CD8-positive, alpha-beta T cell (primary cell): ENCODE measurements at regions of chr20 and their contacts with region 1.

Region 1: DNA sequence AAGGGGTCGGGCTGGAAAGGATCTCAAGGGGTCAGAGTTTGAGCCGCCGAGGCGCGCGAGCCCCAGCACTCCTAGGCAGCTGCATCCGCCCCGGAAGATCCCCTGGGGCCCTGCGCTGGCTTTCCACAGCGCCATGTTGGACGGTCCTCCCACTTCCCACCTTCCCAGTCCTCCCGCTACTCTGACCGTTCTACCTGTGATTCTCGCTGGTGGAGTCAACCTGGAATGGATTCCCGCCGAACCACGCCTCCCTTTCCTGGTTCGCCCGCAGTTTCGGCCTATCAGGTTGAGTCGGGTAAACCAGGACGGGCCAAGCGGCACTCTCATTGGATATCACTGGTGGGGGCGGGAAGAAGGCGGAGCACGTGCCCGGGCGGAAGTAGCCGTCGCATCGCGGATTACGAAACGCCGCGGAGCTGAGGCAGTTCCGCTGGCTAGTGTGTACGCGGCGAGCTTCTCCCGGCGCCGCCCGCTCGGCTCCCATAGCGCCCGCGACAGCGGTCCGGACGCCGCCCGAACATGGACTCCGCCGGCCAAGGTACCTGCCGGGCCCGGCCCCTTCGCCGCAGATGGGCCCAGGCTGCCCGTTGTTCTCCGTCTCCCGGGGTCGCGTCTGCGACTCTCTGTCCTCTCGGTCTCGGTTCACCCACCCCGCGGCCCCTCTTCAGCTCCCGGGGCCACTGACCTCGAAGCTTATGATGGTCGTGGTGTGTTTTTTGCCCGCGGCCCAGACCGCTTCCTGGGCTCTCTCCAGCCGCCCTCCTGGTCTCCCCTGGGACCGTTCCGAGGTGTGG is at the start of gene TPD52L2:
- DNase-seq: peak; percentile 95 to 99 (median 97)
- ATAC-seq: peak; percentile 89
- H3K4me3 ChIP-seq: peak within 1 kb of the TSS; percentile 62 to 95
- H3K4me3 Mint-ChIP-seq: peak within 1 kb of the TSS; percentile 98
- H3K27ac ChIP-seq: peak within 1 kb of the TSS; percentile 59 to 86
- H3K27ac Mint-ChIP-seq: peak within 1 kb of the TSS; percentile 97
- H3K4me1 ChIP-seq: peaks cover 23% of the 10 kb centered on the region
- H3K4me1 Mint-ChIP-seq: peaks cover 34% of the 10 kb centered on the region
- H3K27me3 ChIP-seq: no peaks in the 10 kb centered on the region
- H3K27me3 Mint-ChIP-seq: no peaks in the 10 kb centered on the region
- CTCF ChIP-seq: no peak
- total RNA-seq, gene TPD52L2: 18.7 to 19.4 TPM

Region 2: DNA sequence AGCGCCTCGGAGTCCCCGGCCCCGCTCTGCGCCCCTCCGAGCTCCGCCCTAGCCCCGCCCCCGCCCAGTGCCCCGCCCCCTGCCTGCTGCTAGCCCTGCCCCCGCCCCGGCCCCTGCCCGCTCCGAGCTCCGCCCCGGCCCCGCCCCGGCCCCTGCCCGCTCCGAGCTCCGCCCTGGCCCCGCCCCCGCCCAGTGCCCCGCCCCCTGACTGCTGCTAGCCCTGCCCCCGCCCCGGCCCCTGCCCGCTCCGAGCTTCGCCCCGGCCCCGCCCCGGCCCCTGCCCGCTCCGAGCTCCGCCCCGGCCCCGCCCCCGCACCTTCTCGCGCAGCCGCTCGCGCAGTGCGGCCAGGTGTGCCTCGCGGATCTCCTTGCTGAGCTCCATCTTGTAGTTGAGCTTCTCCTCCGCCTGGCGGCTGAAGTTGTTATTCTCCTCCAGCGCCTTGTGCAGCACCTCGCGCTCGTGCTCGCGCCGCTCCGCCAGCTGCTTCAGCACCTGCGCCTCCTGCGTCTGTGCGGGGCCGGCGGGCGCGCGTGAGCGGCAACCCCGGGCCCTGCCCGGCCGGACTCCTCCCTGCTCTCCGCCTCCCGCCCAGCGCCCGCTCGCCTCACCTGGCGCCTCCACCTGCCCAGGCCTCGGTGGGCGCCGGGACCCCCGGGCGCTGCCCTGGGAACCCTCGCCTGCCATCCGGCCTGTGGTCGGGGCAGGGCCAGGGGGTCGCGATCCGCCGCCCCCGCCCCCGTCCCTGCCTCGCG is 223.1 kb before region 1 on chr20:
- CTCF ChIA-PET with region 1: interaction called, 4 read pairs
- POLR2A ChIA-PET with region 1: interaction called, 3 read pairs
- intact Hi-C with region 1: loop called in 1 of 2 experiments (anchors 5 kb)
- DNase-seq: peak; percentile 96 to 99 (median 97)
- ATAC-seq: peak; percentile 67
- H3K4me3 ChIP-seq: peak overlapping the region; percentile 90 to 98
- H3K4me3 Mint-ChIP-seq: peak overlapping the region; percentile 83
- H3K27ac ChIP-seq: peak overlapping the region; percentile 83 to 94
- H3K27ac Mint-ChIP-seq: peak overlapping the region; percentile 37
- H3K4me1 ChIP-seq: peaks cover 27% of the 10 kb centered on the region
- H3K4me1 Mint-ChIP-seq: peaks cover 24% of the 10 kb centered on the region
- H3K27me3 ChIP-seq: no peaks in the 10 kb centered on the region
- H3K27me3 Mint-ChIP-seq: no peaks in the 10 kb centered on the region
- CTCF ChIP-seq: peak; percentile 53

Region 3: DNA sequence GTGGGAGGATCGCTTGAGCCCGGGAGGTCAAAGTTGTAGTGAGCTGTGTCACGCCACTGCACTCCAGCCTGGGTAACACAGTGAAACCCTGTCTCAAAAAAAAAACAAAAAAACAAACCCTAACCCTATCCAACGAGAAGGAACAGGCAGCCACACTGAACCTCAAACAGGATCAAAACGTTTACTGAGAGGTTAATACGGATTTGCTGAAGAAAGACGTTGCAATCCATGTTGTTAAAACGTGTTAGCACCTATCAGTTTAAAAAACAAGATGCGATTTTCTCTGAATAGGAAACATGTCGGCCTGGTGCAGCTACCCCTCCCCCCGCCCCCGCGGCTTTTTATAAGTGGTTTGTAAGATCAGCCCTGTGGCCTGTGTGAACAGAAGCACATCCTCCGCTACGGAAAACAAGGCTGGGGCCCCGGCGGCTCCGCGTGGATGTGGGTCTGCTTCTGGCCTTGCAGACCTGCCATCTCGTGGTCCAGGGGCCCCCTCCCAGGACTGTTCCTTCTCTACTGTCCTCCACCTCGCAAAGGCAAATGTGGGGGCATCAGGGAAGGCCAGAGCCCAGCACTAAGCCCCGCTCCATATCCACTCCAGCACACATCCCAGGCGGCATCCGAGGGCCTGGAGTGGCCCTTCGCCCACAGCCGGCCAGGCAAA is 114.1 kb before region 1 on chr20:
- CTCF ChIA-PET with region 1: no interaction called
- POLR2A ChIA-PET with region 1: no interaction called
- intact Hi-C with region 1: loop called in 1 of 2 experiments (anchors 1 kb)
- DNase-seq: peak in 8 of 9 experiments; percentile 57 to 87 (median 72)
- ATAC-seq: peak; percentile 86
- H3K4me3 ChIP-seq: peak overlapping the region; percentile 2 to 44
- H3K4me3 Mint-ChIP-seq: peak overlapping the region; percentile 77
- H3K27ac ChIP-seq: peak overlapping the region; percentile 23 to 52
- H3K27ac Mint-ChIP-seq: peak overlapping the region; percentile 91
- H3K4me1 ChIP-seq: peaks cover 27% of the 10 kb centered on the region
- H3K4me1 Mint-ChIP-seq: peaks cover 29% of the 10 kb centered on the region
- H3K27me3 ChIP-seq: no peaks in the 10 kb centered on the region
- H3K27me3 Mint-ChIP-seq: no peaks in the 10 kb centered on the region
- CTCF ChIP-seq: no peak

Region 4: GRCh38 chr20:63830841-63831588 is 34.0 kb before region 1 on chr20 and contains the start of gene ZBTB46:
- CTCF ChIA-PET with region 1: no interaction called
- POLR2A ChIA-PET with region 1: no interaction called
- intact Hi-C with region 1: loop called in 1 of 2 experiments (anchors 1 kb)
- DNase-seq: peak in 2 of 9 experiments; percentile 33 to 41
- ATAC-seq: peak; percentile 36
- H3K4me3 ChIP-seq: peak within 1 kb of the TSS in 1 of 2 experiments; percentile 0
- H3K4me3 Mint-ChIP-seq: peak within 1 kb of the TSS; percentile 78
- H3K27ac ChIP-seq: no peak within 1 kb of the TSS
- H3K27ac Mint-ChIP-seq: no peak within 1 kb of the TSS
- H3K4me1 ChIP-seq: peaks cover 10% of the 10 kb centered on the region
- H3K4me1 Mint-ChIP-seq: peaks cover 10% of the 10 kb centered on the region
- H3K27me3 ChIP-seq: peaks cover 15 to 17% of the 10 kb centered on the region in 2 experiments
- H3K27me3 Mint-ChIP-seq: peaks cover 34% of the 10 kb centered on the region
- CTCF ChIP-seq: no peak
- total RNA-seq, gene ZBTB46: not detected

Region 5: GRCh38 chr20:63955827-63956663 is 91.0 kb after region 1 on chr20 and contains the start of gene UCKL1:
- CTCF ChIA-PET with region 1: no interaction called
- POLR2A ChIA-PET with region 1: interaction called, 3 read pairs
- intact Hi-C with region 1: loop called (anchors 1 to 2 kb)
- DNase-seq: peak; percentile 78 to 93 (median 89)
- ATAC-seq: peak; percentile 81
- H3K4me3 ChIP-seq: peak within 1 kb of the TSS; percentile 73 to 95
- H3K4me3 Mint-ChIP-seq: peak within 1 kb of the TSS; percentile 82
- H3K27ac ChIP-seq: peak within 1 kb of the TSS; percentile 64 to 77
- H3K27ac Mint-ChIP-seq: peak within 1 kb of the TSS; percentile 76
- H3K4me1 ChIP-seq: peaks cover 28% of the 10 kb centered on the region
- H3K4me1 Mint-ChIP-seq: peaks cover 34% of the 10 kb centered on the region
- H3K27me3 ChIP-seq: no peaks in the 10 kb centered on the region
- H3K27me3 Mint-ChIP-seq: no peaks in the 10 kb centered on the region
- CTCF ChIP-seq: no peak
- total RNA-seq, gene UCKL1: 29.6 to 33.7 TPM

Region 6: DNA sequence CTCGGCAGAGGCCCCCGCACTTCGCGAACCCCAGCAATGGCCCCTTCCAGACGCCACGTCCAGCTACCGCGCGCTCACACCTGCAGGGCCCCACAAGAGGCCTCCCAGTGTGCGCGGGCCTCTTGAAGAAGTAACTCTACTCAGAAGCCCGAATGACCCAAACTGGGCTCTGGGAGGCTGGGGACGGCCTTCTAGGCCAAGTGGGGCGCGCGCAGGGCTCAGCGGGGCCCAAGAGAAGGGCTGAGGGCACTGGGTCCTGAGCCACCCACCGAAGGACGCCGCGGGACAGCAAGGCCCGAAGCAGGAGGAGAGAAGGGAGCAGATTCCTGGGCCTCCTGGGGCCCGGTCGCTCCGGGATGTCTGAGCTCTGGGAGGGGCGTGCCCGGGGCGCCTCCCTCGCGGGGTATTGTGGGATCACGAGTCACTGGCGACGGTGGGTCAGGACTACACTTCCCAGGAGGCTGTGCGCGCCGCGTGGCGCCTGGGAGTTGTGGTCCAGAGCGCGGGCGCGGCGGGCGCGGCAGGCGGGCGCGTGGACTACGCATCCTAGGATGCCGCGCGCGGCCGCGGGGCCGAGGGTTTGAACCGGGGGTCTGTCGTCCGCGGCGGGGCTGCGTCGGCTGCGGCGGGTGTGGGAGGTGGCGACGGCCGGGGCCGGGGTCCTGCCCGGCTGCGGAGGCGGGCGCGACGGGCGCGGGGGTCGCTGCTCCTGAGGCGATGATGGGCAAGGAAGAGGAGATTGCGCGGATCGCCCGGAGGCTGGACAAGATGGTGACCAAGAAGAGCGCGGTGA is 197.7 kb after region 1 on chr20 and contains the start of gene TCEA2:
- CTCF ChIA-PET with region 1: no interaction called
- POLR2A ChIA-PET with region 1: no interaction called
- intact Hi-C with region 1: loop called in 1 of 2 experiments (anchors 1 kb)
- DNase-seq: peak; percentile 84 to 97 (median 93)
- ATAC-seq: peak; percentile 94
- H3K4me3 ChIP-seq: peak within 1 kb of the TSS; percentile 47 to 68
- H3K4me3 Mint-ChIP-seq: peak within 1 kb of the TSS; percentile 82
- H3K27ac ChIP-seq: peak within 1 kb of the TSS; percentile 42 to 67
- H3K27ac Mint-ChIP-seq: peak within 1 kb of the TSS; percentile 63
- H3K4me1 ChIP-seq: peaks cover 48% of the 10 kb centered on the region
- H3K4me1 Mint-ChIP-seq: peaks cover 36% of the 10 kb centered on the region
- H3K27me3 ChIP-seq: no peaks in the 10 kb centered on the region
- H3K27me3 Mint-ChIP-seq: no peaks in the 10 kb centered on the region
- CTCF ChIP-seq: no peak
- total RNA-seq, gene TCEA2: 18.2 to 18.4 TPM